Activated B cell treated with CpG ODN at 0.5 μM for 24 hours (primary cell): ENCODE measurements at regions of chr16 and their contacts with region 1.

Region 1: GRCh38 chr16:30065143-30065850 is at the start of gene ALDOA:
- DNase-seq: peak; percentile 91
- ATAC-seq: peak; percentile 86
- H3K4me3 Mint-ChIP-seq: peak within 1 kb of the TSS; percentile 99
- H3K27ac Mint-ChIP-seq: peak within 1 kb of the TSS; percentile 99
- H3K4me1 Mint-ChIP-seq: peaks cover 35% of the 10 kb centered on the region
- H3K27me3 Mint-ChIP-seq: no peaks in the 10 kb centered on the region
- CTCF ChIP-seq: no peak
- total RNA-seq, gene ALDOA: 611 and 613 TPM in 2 replicates

Region 2: GRCh38 chr16:30052671-30053372 is 12.5 kb before region 1 on chr16:
- CTCF ChIA-PET with region 1: interaction called, 3 read pairs
- POLR2A ChIA-PET with region 1: interaction called, 27 read pairs
- intact Hi-C with region 1: loop called (anchors 1 kb)
- DNase-seq: peak; percentile 86
- ATAC-seq: peak; percentile 87
- H3K4me3 Mint-ChIP-seq: peak overlapping the region; percentile 84
- H3K27ac Mint-ChIP-seq: peak overlapping the region; percentile 46
- H3K4me1 Mint-ChIP-seq: peaks cover 9% of the 10 kb centered on the region
- H3K27me3 Mint-ChIP-seq: no peaks in the 10 kb centered on the region
- CTCF ChIP-seq: no peak

Region 3: DNA sequence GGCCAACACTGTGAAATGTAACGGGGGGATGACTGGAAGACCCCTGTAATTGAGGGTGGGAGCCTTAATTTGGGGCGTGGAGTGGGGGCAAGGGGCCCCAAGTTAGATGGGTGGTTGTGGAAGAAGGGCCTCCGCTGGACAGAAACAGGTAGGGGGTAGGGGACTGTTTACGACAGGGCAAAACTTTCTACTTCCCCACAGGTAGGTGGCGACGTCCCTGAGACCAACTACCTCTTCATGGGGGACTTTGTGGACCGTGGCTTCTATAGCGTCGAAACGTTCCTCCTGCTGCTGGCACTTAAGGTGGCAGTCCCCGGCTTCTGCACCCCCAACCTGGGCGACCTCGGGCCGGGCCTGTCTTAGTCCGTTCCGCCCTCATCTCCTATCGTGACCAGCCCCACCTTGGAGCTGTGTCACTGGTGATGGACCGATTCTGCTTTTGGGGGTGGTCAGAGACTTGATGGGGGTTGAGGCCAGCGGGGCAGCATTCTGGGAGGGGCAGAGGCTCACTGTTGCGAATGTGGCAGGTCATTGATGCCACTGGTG is 17.3 kb after region 1 on chr16:
- CTCF ChIA-PET with region 1: no interaction called
- POLR2A ChIA-PET with region 1: interaction called, 75 read pairs
- intact Hi-C with region 1: no loop called
- DNase-seq: no peak
- ATAC-seq: no peak
- H3K4me3 Mint-ChIP-seq: no peak overlapping the region
- H3K27ac Mint-ChIP-seq: no peak overlapping the region
- H3K4me1 Mint-ChIP-seq: peaks cover 13% of the 10 kb centered on the region
- H3K27me3 Mint-ChIP-seq: no peaks in the 10 kb centered on the region
- CTCF ChIP-seq: no peak

Region 4: GRCh38 chr16:30122604-30123160 is 57.4 kb after region 1 on chr16:
- CTCF ChIA-PET with region 1: no interaction called
- POLR2A ChIA-PET with region 1: interaction called, 5 read pairs
- intact Hi-C with region 1: loop called (anchors 1 kb)
- DNase-seq: peak; percentile 21
- ATAC-seq: peak; percentile 5
- H3K4me3 Mint-ChIP-seq: peak overlapping the region; percentile 86
- H3K27ac Mint-ChIP-seq: peak overlapping the region; percentile 76
- H3K4me1 Mint-ChIP-seq: peaks cover 22% of the 10 kb centered on the region
- H3K27me3 Mint-ChIP-seq: no peaks in the 10 kb centered on the region
- CTCF ChIP-seq: no peak

Region 5: DNA sequence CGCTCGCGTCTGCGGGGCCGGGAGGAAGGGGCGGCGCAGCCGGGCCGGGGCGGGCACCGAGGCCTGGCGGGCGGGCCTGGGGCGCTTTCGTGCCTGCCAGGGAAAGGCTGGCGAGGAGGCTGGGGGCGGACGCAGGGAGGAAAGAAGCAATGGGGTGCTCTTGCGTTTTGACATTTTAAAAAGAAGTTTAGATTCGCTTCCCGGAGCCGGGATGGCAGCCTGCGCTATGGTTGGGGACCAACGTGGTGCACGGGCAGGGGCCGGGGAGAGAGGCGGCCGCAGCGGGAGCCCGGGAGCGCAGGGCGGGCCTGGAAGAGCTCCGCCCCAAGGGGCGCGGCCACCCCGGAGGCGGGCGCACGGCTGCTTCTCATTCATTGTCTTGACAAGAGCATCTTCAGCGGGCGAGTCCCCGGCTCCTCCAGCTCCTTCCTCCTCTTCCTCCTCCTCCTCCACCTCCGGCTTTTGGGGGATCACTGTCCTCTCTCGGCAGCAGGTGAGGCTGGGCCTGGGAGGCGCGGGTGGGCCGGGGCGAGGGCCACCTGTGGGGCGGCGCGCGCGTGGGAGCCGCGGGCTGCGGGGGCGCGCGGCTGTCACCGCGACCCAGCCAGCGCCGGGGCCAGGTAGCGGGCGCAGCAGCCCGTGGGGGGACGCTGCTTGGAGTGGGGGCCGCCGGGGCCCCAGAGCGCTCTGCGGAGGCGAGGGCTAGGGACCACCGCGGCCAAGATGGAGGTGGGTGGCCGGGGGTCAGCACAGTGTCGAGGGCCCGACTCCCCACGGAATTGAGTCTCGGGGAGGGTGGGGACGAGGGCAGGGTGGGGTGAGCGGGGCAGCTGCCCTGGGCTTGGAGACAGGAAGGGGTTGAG is 118.2 kb after region 1 on chr16 and contains the start of gene CORO1A:
- CTCF ChIA-PET with region 1: no interaction called
- POLR2A ChIA-PET with region 1: interaction called, 89 read pairs
- intact Hi-C with region 1: no loop called
- DNase-seq: peak; percentile 86
- ATAC-seq: peak; percentile 60
- H3K4me3 Mint-ChIP-seq: peak within 1 kb of the TSS; percentile 98
- H3K27ac Mint-ChIP-seq: peak within 1 kb of the TSS; percentile 97
- H3K4me1 Mint-ChIP-seq: peaks cover 41% of the 10 kb centered on the region
- H3K27me3 Mint-ChIP-seq: no peaks in the 10 kb centered on the region
- CTCF ChIP-seq: no peak
- total RNA-seq, gene CORO1A: 1,030 and 1,060 TPM in 2 replicates

Region 6: DNA sequence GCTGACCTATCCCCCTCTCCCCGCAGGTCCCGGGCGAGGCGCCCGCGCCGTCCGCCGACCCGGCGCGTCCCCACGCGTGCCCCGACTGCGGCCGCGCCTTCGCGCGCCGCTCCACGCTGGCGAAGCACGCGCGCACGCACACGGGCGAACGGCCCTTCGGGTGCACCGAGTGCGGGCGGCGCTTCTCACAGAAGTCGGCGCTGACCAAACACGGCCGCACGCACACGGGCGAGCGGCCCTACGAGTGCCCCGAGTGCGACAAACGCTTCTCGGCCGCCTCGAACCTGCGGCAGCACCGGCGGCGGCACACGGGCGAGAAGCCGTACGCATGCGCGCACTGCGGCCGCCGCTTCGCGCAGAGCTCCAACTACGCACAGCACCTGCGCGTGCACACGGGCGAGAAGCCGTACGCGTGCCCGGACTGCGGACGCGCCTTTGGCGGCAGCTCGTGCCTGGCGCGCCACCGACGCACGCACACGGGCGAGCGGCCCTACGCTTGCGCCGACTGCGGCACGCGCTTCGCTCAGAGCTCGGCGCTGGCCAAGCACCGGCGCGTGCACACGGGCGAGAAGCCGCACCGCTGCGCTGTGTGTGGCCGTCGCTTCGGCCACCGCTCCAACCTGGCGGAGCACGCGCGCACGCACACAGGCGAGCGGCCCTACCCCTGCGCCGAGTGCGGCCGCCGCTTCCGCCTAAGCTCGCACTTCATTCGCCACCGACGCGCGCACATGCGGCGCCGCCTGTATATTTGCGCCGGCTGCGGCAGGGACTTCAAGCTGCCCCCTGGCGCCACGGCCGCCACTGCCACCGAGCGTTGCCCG is 352.4 kb after region 1 on chr16:
- CTCF ChIA-PET with region 1: no interaction called
- POLR2A ChIA-PET with region 1: interaction called, 11 read pairs
- intact Hi-C with region 1: no loop called
- DNase-seq: peak; percentile 84
- ATAC-seq: peak; percentile 86
- H3K4me3 Mint-ChIP-seq: peak overlapping the region; percentile 71
- H3K27ac Mint-ChIP-seq: peak overlapping the region; percentile 69
- H3K4me1 Mint-ChIP-seq: peaks cover 12% of the 10 kb centered on the region
- H3K27me3 Mint-ChIP-seq: no peaks in the 10 kb centered on the region
- CTCF ChIP-seq: no peak

Region 7: GRCh38 chr16:30715737-30716445 is 650.6 kb after region 1 on chr16:
- CTCF ChIA-PET with region 1: no interaction called
- POLR2A ChIA-PET with region 1: interaction called, 12 read pairs
- intact Hi-C with region 1: no loop called
- DNase-seq: no peak
- ATAC-seq: peak; percentile 99
- H3K4me3 Mint-ChIP-seq: peak overlapping the region; percentile 50
- H3K27ac Mint-ChIP-seq: peak overlapping the region; percentile 91
- H3K4me1 Mint-ChIP-seq: peaks cover 26% of the 10 kb centered on the region
- H3K27me3 Mint-ChIP-seq: no peaks in the 10 kb centered on the region
- CTCF ChIP-seq: no peak